Activated T-helper 2 cell treated with anti-CD3 and anti-CD28 coated beads, Interferon-gamma antibody, Interleukin-2, Interleukin-4, amounts not matched to agents 10 μg/mL and 5 μg/mL and 100 μg/mL, durations not matched to agents 14 hours and 24 hours and 36 hours (primary cell): ENCODE measurements at regions of chr4 and their contacts with region 1.

Region 1: DNA sequence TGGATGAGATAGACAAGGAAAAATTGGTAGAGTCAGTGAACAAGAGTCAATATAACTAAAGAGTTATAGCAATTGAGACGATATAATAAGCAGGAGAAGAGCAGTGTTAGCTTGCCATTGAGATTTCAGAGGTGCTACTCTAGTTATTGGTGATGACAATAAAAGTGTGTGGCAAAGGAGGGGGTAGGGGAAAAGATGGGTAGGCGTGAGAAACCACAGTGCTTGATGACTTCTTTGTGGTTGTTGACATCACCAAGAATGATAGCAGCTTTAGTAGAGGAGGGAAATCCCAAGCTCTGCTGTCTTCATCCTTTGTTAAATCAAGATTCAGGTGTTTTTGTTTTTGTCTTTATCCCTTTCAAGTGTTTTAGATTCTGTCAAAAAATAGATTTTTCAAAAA is 179.9 kb upstream of the PPP3CA start:
- DNase-seq: peak; percentile 32
- H3K4me3 Mint-ChIP-seq: no peak overlapping the region
- H3K27ac Mint-ChIP-seq: no peak overlapping the region
- H3K4me1 Mint-ChIP-seq: peaks cover 21% of the 10 kb centered on the region
- H3K27me3 Mint-ChIP-seq: peaks cover 36% of the 10 kb centered on the region

Region 2: GRCh38 chr4:99816545-99817308 is 1710.5 kb before region 1 on chr4 and contains the start of gene DAPP1:
- intact Hi-C with region 1: loop called (anchors 10 kb)
- DNase-seq: peak; percentile 83
- H3K4me3 Mint-ChIP-seq: peak within 1 kb of the TSS; percentile 92
- H3K27ac Mint-ChIP-seq: peak within 1 kb of the TSS; percentile 94
- H3K4me1 Mint-ChIP-seq: peaks cover 73% of the 10 kb centered on the region
- H3K27me3 Mint-ChIP-seq: no peaks in the 10 kb centered on the region
- total RNA-seq, gene DAPP1: 21.4 and 23.6 TPM in 2 replicates

Region 3: GRCh38 chr4:101103381-101104142 is 423.6 kb before region 1 on chr4:
- intact Hi-C with region 1: loop called (anchors 5 kb)
- DNase-seq: no peak
- H3K4me3 Mint-ChIP-seq: peak overlapping the region; percentile 11
- H3K27ac Mint-ChIP-seq: peak overlapping the region; percentile 52
- H3K4me1 Mint-ChIP-seq: peaks cover 25% of the 10 kb centered on the region
- H3K27me3 Mint-ChIP-seq: no peaks in the 10 kb centered on the region

Region 4: GRCh38 chr4:101155368-101155767 is 371.8 kb before region 1 on chr4:
- intact Hi-C with region 1: loop called (anchors 5 kb)
- DNase-seq: no peak
- H3K4me3 Mint-ChIP-seq: no peak overlapping the region
- H3K27ac Mint-ChIP-seq: no peak overlapping the region
- H3K4me1 Mint-ChIP-seq: peaks cover 29% of the 10 kb centered on the region
- H3K27me3 Mint-ChIP-seq: no peaks in the 10 kb centered on the region

Region 5: DNA sequence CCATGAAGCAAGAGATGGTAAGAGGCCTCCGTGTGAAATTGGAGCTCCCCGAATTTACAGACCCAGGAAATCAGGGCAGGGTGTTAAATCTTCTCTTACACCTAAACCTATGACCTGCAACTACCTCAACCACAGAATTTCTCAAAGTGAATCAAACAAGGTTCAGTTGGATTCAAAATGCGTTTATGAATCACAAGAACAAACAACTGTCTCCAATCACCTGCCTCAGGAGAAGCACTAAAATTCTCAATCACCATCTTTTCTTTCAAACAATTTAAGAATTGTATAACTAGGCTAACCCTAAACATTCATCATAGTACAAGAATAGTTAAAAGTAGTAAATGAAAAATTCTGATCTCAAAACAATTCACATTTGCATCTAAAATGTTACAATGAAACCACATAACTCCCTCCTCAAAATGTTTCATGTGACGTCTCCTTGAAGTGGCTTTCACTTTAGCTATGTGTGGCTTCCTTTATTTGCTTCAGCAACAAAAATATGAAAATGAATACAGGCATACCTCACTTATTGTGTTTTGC is 199.1 kb before region 1 on chr4:
- intact Hi-C with region 1: loop called (anchors 5 kb)
- DNase-seq: no peak
- H3K4me3 Mint-ChIP-seq: peak overlapping the region; percentile 46
- H3K27ac Mint-ChIP-seq: peak overlapping the region; percentile 88
- H3K4me1 Mint-ChIP-seq: peaks cover 34% of the 10 kb centered on the region
- H3K27me3 Mint-ChIP-seq: peaks cover 24% of the 10 kb centered on the region

Region 6: GRCh38 chr4:101400096-101400495 is 127.1 kb before region 1 on chr4:
- intact Hi-C with region 1: loop called (anchors 1 kb)
- DNase-seq: no peak
- H3K4me3 Mint-ChIP-seq: no peak overlapping the region
- H3K27ac Mint-ChIP-seq: peak overlapping the region; percentile 51
- H3K4me1 Mint-ChIP-seq: peaks cover 18% of the 10 kb centered on the region
- H3K27me3 Mint-ChIP-seq: no peaks in the 10 kb centered on the region

Region 7: GRCh38 chr4:101596781-101597552 is 69.8 kb after region 1 on chr4:
- intact Hi-C with region 1: loop called (anchors 5 kb)
- DNase-seq: no peak
- H3K4me3 Mint-ChIP-seq: no peak overlapping the region
- H3K27ac Mint-ChIP-seq: no peak overlapping the region
- H3K4me1 Mint-ChIP-seq: peaks cover 1% of the 10 kb centered on the region
- H3K27me3 Mint-ChIP-seq: peaks cover 3% of the 10 kb centered on the region